ENCODE measurements at regions of chr18 and their contacts with region 1.

Region 1: DNA sequence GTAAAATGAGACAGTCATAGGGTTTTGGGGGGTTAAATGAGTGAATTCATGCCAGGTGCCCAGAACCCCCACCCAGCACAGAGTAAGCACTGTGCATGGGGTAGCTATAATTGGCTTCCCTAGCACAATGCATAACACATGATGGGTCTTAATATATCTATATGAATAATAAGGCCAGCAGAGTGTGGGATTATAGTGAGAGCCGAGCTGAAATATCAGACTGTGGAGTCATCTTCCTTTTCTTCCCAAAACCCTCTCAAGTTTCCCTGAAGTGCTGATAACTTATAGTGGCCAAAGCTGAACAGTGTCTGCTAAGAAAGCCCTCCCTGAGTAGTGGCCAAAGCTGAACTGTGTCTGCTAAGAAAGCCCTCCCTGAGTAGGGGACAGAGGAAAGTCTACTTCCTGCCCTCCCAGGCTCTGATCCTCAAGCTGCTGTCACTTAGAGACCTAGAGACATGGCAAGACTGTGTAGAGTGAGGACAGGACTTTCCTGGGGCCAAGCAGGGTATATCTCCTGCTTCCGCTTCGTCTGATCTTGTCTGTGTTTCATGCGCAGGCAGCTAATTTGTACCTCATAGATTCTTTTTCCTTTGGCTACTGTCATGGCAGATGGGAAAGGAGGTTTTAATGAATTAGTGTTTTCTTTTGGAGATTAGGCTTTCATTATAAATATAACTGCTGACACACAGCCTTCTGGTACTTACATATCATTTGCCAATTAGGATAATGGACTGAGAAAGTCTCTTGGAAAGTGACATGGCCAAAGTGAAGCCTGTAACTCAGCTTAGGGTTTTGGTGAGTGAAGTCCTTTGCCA is 94.9 kb downstream of the FHOD3 start:
- DNase-seq: no peak
- ATAC-seq: no peak
- H3K4me3 ChIP-seq: no peak overlapping the region
- H3K27ac ChIP-seq: no peak overlapping the region
- H3K4me1 ChIP-seq: no peaks in the 10 kb centered on the region
- H3K27me3 ChIP-seq: no peaks in the 10 kb centered on the region
- CTCF ChIP-seq: no peak
- POLR2A ChIP-seq: no peak

Region 2: DNA sequence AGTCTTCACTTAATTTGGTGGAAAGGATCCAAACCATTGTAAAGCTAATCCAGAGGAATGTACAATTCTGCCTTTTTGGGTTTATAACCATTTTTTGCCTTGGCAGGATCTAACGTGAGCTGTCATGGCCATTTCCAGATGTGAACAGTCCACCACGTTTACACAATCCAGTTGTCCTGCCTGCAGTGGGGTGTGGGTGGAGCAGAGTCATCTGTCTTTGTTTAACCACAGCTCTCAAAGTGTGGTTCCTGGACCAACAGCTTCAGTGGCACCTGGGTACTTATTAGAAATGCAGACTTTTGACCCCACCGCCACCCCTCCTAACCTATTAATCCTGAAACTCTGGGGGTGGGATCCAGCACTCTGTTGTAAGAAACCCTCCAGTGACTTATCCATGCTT is 59.0 kb before region 1 on chr18:
- intact Hi-C with region 1: loop called in 1 of 2 experiments (anchors 10 kb)
- DNase-seq: no peak
- ATAC-seq: no peak
- H3K4me3 ChIP-seq: no peak overlapping the region
- H3K27ac ChIP-seq: no peak overlapping the region
- H3K4me1 ChIP-seq: no peaks in the 10 kb centered on the region
- H3K27me3 ChIP-seq: no peaks in the 10 kb centered on the region
- CTCF ChIP-seq: no peak
- POLR2A ChIP-seq: no peak

Measured in right lobe of liver (tissue), 6 donors.